OCI-LY7 (cell line): ENCODE measurements at regions of chr3 and their contacts with region 1.

Region 1: DNA sequence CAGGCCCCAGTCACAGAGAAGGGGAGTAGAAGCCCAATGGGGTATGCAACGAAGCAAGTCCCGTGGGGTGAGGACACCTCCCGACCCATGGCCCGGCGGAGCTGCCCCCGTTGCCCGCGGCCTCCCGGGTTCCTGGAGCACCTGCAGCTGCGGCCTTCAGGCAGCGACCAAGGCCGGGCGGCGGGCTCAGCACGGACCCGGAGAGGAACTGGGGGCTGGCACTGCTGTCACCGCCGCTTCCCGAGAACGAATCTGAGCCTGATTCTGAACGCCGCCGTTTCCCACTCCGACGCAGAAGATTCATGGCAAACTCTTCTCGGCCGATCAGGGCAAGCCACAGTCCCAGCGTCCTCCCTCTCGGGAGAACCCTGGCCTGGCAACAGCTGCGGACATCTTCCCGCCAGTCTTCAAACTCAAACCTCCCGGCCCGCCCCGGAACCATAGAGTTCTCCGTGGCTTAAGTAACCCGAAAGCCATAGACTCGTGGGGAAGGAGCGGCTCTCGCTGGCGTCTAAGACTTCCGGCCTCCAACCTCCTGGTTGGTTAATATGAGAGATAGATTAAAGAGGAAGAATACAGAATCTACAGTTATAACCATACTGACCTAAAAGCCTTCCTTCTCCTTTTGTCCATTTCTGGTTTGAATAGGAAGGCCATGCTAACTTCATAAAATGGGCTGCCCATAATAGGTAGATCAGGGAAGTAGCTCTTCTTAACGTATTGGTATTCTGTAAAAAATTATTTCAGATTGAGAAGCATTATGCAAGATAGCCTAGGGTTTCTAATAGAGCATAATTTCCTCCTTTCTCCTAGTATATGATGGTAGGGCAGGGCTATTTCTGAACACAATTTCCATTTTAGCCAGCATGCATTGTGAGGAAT is at the start of gene POLQ:
- DNase-seq: peak; percentile 96
- H3K4me3 ChIP-seq: peak within 1 kb of the TSS; percentile 93
- H3K27ac ChIP-seq: peak within 1 kb of the TSS; percentile 77
- H3K4me1 ChIP-seq: peaks cover 27% of the 10 kb centered on the region
- CTCF ChIP-seq: no peak
- total RNA-seq, gene POLQ: 58.2 and 61.1 TPM in 2 replicates

Region 2: GRCh38 chr3:121167374-121168128 is 378.3 kb before region 1 on chr3:
- CTCF ChIA-PET with region 1: no interaction called
- POLR2A ChIA-PET with region 1: no interaction called
- intact Hi-C with region 1: no loop called
- DNase-seq: no peak
- H3K4me3 ChIP-seq: no peak overlapping the region
- H3K27ac ChIP-seq: no peak overlapping the region
- H3K4me1 ChIP-seq: no peaks in the 10 kb centered on the region
- CTCF ChIP-seq: no peak

Region 3: DNA sequence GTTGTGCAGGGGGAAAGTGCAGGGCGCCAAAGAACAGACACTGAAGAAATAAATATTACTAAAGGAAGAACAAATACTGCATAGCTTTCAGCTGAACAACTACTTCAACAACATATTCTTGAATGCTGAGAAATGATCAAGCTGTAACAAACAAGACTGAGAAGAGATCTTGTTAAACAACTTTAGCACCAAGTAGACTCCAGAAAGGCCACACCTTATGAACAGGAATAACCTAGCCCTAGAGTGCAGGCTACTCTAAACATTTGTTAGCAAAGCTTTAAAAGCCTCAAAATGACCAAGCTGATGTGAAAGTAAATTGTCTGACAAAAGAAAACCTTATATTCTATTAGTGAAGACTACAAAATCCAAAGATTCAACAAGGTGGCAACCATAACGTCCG is 83.2 kb before region 1 on chr3:
- CTCF ChIA-PET with region 1: no interaction called
- POLR2A ChIA-PET with region 1: no interaction called
- intact Hi-C with region 1: no loop called
- DNase-seq: no peak
- H3K4me3 ChIP-seq: no peak overlapping the region
- H3K27ac ChIP-seq: no peak overlapping the region
- H3K4me1 ChIP-seq: no peaks in the 10 kb centered on the region
- CTCF ChIP-seq: no peak

Region 4: DNA sequence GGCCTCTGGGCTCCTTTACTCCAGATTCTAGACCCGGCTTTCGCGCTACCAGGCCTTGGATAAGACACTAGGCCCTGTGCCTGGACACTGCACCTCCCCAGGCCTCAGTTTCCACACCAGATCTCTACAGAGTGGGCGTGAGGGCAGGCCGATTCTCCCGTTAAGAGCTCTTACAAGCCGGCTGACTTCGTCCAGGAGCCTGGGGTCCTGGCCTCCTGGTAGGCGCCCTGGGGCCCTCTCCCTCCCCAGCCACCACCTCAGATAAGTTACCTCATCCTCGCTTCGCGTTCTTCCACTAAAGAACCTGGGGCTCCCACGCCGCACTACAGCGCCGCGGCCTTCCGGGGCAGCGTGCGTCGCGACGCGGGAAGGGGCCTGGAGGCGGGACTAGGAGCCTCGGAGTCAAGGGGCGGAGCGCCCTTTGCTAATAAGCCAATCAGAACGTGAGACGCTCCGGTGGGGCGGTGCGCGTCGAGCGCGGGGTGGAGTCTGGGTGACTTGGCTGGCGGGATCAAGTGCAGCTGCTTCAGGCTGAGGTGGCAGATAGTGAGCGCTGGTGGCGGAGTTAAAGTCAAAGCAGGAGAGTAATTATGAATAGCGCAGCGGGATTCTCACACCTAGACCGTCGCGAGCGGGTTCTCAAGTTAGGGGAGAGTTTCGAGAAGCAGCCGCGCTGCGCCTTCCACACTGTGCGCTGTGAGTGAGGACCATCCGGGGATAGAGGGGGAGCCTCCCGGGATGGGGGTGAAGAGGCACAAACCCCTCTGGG is 289.1 kb after region 1 on chr3 and contains the starts of genes EAF2 and IQCB1:
- CTCF ChIA-PET with region 1: no interaction called
- POLR2A ChIA-PET with region 1: interaction called, 4 read pairs
- intact Hi-C with region 1: loop called (anchors 1 kb)
- DNase-seq: peak; percentile 98
- H3K4me3 ChIP-seq: peak within 1 kb of the TSS; percentile 93
- H3K27ac ChIP-seq: peak within 1 kb of the TSS; percentile 83
- H3K4me1 ChIP-seq: peaks cover 58% of the 10 kb centered on the region
- CTCF ChIP-seq: peak; percentile 21; the same call in 1 of the 2 replicates
- total RNA-seq, gene EAF2: 66.3 and 78.1 TPM in 2 replicates
- total RNA-seq, gene IQCB1: 77.5 and 108 TPM in 2 replicates

Region 5: DNA sequence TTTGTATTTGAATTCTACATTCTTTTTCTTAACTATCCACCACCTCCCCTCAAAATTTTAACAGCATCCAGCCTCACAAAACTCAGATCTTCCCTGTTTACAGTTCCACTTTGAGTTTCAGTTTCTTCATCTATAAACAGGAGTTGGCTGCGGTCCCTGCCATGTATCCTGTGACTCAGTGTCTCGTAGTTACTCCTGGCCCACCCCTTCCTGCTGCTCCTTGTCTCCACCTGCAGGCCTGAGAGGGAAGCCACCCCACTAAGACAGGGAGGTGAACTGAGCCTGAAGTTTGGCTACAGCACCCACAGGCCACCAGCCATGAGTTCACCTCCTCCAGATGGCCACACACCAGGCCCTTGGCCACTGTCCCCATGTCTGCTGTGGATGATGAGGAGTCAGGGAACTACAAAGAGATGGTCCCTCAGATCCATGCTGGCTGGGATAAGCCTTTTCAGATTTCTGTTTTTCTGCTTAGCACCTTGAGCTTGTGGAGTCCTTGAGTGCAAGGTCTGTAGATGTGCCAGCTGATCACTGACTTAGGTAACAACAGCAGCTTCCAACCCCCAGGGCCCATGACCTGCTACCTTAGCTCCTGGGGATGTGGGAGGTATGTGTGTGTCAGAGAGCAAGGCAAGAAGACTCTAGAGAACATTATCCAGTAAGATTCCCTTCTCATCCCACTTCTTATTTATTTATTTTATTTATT is 546.8 kb after region 1 on chr3:
- CTCF ChIA-PET with region 1: no interaction called
- POLR2A ChIA-PET with region 1: no interaction called
- intact Hi-C with region 1: loop called (anchors 5 kb)
- DNase-seq: peak; percentile 56
- H3K4me3 ChIP-seq: peak overlapping the region; percentile 49
- H3K27ac ChIP-seq: peak overlapping the region; percentile 82
- H3K4me1 ChIP-seq: peaks cover 68% of the 10 kb centered on the region
- CTCF ChIP-seq: peak; percentile 87

Region 6: DNA sequence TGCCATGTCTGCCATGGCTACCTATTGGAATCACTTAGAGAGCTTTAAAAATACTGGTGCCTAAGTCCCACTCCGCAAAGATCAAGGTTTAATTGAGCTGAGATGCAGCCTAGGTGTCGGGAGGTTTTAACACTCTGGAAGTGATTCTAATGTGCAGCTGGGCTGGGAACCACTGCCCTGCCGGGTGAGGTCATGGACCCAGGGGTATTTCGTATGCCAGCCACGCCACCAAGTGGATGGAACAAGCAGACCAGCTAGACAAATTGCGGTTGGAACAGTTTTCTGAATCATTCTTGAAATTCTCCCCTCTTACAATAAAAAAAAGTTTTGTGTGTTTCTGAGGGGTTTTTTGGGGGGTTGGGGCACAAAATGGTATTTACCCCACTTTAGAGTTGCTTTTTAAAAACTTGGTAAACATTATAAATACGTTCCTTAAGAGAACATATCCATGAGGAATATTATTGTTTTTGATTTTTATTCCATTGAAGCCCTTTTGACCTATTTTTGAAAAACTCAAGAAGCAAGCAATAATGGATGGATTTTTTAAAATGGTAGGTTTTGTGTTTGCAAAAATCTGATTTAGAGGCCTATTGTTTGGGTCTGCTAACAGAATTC is 713.0 kb after region 1 on chr3:
- CTCF ChIA-PET with region 1: no interaction called
- POLR2A ChIA-PET with region 1: interaction called, 4 read pairs
- intact Hi-C with region 1: loop called (anchors 1 kb)
- DNase-seq: peak; percentile 82
- H3K4me3 ChIP-seq: no peak overlapping the region
- H3K27ac ChIP-seq: no peak overlapping the region
- H3K4me1 ChIP-seq: peaks cover 5% of the 10 kb centered on the region
- CTCF ChIP-seq: peak; percentile 95

Region 7: DNA sequence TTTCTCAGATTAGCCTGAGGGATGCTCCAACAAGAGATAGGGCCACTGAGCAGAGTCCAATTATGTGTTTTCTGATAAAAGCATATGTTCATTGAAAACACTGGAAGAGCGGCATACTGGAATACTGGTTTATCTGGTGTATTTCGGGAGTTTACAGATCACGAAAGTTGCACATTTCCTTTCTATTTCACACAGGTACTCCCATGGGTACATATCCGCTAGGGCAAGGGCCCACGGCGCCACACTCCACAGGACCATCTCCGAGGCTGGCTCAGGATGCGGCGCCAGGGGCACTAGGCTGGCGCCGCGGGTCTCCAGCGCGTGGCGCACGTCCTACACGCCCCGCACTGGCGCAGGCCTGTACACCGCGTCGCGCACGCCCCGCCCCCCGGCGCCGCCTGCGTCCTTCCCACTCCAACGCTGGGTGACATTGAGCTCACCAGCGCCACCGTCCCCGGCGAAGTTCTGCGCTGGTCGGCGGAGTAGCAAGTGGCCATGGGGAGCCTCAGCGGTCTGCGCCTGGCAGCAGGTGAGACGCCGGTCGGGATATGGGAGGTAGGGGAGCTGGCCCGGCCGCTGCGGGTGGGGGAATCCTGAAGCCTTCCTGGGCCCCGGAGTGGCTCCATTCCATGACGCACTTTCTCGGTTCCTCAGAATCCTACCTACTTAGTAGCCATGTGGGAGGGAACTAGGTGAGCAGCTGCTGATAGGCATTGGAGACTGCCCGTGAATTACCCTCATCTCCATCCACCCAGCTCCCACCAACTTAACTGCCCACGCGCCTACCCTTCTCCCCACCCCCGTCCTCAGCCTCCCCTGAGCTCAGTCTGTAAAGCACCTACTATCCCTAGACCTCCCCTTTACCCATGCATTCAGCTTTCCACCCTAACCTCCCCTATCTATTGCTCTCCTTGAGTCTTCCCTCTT is 838.2 kb after region 1 on chr3 and contains the start of gene FAM162A:
- CTCF ChIA-PET with region 1: interaction called, 4 read pairs
- POLR2A ChIA-PET with region 1: no interaction called
- intact Hi-C with region 1: loop called (anchors 1 kb)
- DNase-seq: peak; percentile 96
- H3K4me3 ChIP-seq: peak within 1 kb of the TSS; percentile 83
- H3K27ac ChIP-seq: peak within 1 kb of the TSS; percentile 74
- H3K4me1 ChIP-seq: peaks cover 47% of the 10 kb centered on the region
- CTCF ChIP-seq: peak; percentile 80
- total RNA-seq, gene FAM162A: 27.9 and 43.2 TPM in 2 replicates